Cardiac septum (tissue), 1 donor: ENCODE measurements at regions of chr6 and their contacts with region 1.

Region 1: DNA sequence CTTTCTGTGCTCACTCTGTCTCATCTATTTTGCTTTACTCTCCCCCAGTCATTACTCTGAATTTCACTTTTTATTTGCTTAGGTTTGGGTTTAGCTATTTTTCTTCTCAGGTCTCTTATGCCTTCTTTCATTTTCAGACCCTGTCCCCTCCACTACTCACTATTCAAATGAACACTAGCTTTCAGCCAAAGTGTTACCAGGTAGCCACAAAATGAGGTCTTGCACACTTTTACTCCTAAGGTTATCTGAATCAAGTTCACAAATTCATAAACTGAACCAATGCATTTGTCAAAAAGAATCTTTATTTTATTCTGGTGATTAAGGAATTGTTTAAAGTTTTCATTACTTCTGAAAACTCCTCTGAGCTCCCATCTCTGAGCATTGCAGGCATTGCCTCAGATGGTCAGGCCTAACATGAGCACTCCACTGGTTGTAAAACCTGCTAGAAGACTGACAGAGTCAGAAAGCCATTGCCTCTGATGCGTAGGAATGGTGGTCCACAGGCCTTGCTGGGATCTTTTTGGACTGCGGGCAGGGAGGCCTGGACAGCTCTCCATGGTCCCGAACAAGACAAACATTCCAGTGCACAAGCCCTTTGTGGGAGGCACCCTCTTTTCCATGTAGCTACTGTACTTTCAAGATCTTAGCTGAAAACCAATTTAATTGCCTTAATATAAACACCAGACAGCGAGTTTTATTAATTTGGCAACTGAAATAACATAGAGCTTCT is 48.5 kb downstream of the FYN start:
- DNase-seq: no peak

Region 2: GRCh38 chr6:111605100-111605751 is 219.5 kb before region 1 on chr6:
- intact Hi-C with region 1: no loop called
- DNase-seq: peak; percentile 84

Region 3: GRCh38 chr6:111789598-111789997 is 35.2 kb before region 1 on chr6:
- intact Hi-C with region 1: loop called (anchors 5 kb)
- DNase-seq: no peak

Region 4: GRCh38 chr6:112232845-112233256 is 408.1 kb after region 1 on chr6:
- intact Hi-C with region 1: no loop called
- DNase-seq: peak; percentile 81